Activated B cell treated with CpG ODN at 0.5 μM for 24 hours (primary cell): ENCODE measurements at regions of chr2 and their contacts with region 1.

Region 1: GRCh38 chr2:25309402-25309801 is 32.3 kb downstream of the DNMT3A start:
- DNase-seq: peak; percentile 46
- ATAC-seq: peak; percentile 71
- H3K4me3 Mint-ChIP-seq: no peak overlapping the region
- H3K27ac Mint-ChIP-seq: no peak overlapping the region
- H3K4me1 Mint-ChIP-seq: peaks cover 16% of the 10 kb centered on the region
- H3K27me3 Mint-ChIP-seq: no peaks in the 10 kb centered on the region
- CTCF ChIP-seq: no peak

Region 2: GRCh38 chr2:24824966-24825882 is 484.2 kb before region 1 on chr2:
- CTCF ChIA-PET with region 1: no interaction called
- POLR2A ChIA-PET with region 1: no interaction called
- intact Hi-C with region 1: no loop called
- DNase-seq: no peak
- ATAC-seq: peak; percentile 32
- H3K4me3 Mint-ChIP-seq: no peak overlapping the region
- H3K27ac Mint-ChIP-seq: no peak overlapping the region
- H3K4me1 Mint-ChIP-seq: peaks cover 3% of the 10 kb centered on the region
- H3K27me3 Mint-ChIP-seq: no peaks in the 10 kb centered on the region
- CTCF ChIP-seq: no peak

Region 3: GRCh38 chr2:25332571-25332970 is 23.2 kb after region 1 on chr2:
- CTCF ChIA-PET with region 1: no interaction called
- POLR2A ChIA-PET with region 1: no interaction called
- intact Hi-C with region 1: no loop called
- DNase-seq: no peak
- ATAC-seq: no peak
- H3K4me3 Mint-ChIP-seq: no peak overlapping the region
- H3K27ac Mint-ChIP-seq: no peak overlapping the region
- H3K4me1 Mint-ChIP-seq: peaks cover 42% of the 10 kb centered on the region
- H3K27me3 Mint-ChIP-seq: no peaks in the 10 kb centered on the region
- CTCF ChIP-seq: no peak

Region 4: GRCh38 chr2:25664183-25664964 is 355.0 kb after region 1 on chr2:
- CTCF ChIA-PET with region 1: interaction called, 7 read pairs
- POLR2A ChIA-PET with region 1: no interaction called
- intact Hi-C with region 1: loop called (anchors 1 kb)
- DNase-seq: no peak
- ATAC-seq: peak; percentile 42
- H3K4me3 Mint-ChIP-seq: peak overlapping the region; percentile 20
- H3K27ac Mint-ChIP-seq: no peak overlapping the region
- H3K4me1 Mint-ChIP-seq: peaks cover 7% of the 10 kb centered on the region
- H3K27me3 Mint-ChIP-seq: no peaks in the 10 kb centered on the region
- CTCF ChIP-seq: no peak